ENCODE measurements at regions of chr11 and their contacts with region 1.

Region 1: DNA sequence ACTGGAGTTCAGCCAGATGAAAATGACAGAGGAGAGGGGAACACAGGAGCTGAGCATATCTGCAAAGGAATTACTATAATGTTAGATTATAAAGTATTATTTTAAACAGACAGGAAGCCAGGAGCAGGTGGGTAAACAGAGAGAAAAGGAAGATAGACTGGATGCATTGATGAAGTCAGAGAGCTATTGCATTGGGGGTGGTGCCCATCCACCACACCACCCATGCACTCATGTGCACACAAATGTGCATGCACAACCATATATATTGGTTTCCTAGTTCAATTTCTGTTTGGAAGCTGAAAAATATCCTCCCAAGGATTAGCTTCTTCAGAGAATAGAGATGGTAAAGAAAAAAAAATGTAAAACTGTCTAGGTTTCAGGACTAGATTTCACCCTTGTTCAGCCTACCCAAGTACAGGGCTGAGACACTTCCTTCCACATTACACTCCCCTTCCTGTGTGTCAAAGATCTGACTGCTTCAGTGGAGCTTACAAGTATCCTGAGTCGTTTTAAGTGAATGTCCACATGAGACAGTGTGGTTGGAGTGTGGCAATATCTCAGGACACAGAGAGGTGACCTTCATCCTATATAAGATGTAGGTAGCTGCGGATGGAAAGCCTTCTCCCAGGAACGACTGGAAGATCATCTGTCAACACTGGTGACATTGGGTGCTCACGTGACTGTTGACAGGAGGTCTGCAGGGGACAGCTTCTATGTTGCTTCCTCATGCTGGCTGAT is 12.2 kb upstream of the SMPD1 start:
- DNase-seq: no peak
- ATAC-seq: peak; percentile 79
- H3K4me3 Mint-ChIP-seq: peak overlapping the region; percentile 38
- H3K27ac Mint-ChIP-seq: peak overlapping the region; percentile 86
- H3K4me1 Mint-ChIP-seq: peaks cover 31% of the 10 kb centered on the region
- H3K27me3 Mint-ChIP-seq: no peaks in the 10 kb centered on the region

Region 2: DNA sequence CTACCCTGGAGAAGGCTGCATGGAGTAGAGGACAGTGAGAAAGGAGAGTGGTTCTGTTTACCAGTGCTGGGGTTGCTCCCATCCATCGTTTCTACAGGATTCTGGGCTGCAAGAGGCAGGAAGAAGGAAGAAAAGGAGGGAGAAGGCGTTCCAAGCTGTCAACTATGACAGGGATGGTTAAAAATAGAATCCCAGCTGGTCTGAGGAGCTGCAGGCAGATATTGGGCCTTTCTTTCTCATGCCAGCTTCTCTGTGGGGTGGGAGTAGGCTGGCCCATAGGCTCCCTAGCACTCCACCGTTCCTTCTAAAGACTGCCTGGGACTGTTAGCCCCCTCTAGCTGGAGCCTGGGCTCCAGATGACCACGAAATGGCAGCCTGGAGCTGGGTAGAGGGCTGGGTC is 104.9 kb before region 1 on chr11:
- CTCF ChIA-PET with region 1: no interaction called
- DNase-seq: no peak
- ATAC-seq: no peak
- H3K4me3 Mint-ChIP-seq: no peak overlapping the region
- H3K27ac Mint-ChIP-seq: no peak overlapping the region
- H3K4me1 Mint-ChIP-seq: peaks cover 7% of the 10 kb centered on the region
- H3K27me3 Mint-ChIP-seq: peaks cover 44% of the 10 kb centered on the region

Region 3: GRCh38 chr11:6362873-6363678 is 15.0 kb before region 1 on chr11:
- CTCF ChIA-PET with region 1: interaction called, 95 read pairs
- DNase-seq: peak; percentile 83
- ATAC-seq: peak; percentile 91
- H3K4me3 Mint-ChIP-seq: no peak overlapping the region
- H3K27ac Mint-ChIP-seq: no peak overlapping the region
- H3K4me1 Mint-ChIP-seq: no peaks in the 10 kb centered on the region
- H3K27me3 Mint-ChIP-seq: no peaks in the 10 kb centered on the region

Region 4: DNA sequence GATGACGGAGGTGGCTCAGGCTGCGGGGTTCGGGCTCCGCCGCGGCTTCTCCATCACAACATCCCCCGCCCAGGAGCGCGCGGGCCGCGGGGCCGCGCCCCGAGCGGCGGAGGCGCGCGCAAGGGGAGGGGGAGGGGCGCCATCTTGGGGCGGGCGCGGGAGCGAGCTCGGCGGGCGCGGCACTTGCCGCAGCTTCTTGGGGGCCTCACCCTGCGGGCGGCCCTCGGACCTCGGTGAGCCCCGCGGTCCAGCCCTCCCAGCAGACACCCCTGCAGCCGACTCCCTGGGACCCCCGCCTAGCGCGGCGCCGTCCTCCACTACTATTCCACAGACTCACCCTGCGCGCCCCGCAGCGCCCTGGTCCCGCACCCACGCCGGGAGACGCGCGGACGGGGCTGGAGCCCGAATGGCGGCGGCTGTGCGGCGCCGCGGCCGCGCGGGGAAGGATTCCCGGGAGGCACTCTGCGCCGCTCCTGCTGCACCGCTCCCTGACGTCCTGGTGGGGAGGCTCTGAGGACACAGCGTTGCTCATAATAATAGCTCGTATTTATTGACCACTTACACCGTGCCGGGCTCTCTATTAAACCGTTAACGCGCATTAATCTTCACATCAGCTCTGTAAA is 41.0 kb after region 1 on chr11 and contains the start of gene APBB1:
- CTCF ChIA-PET with region 1: interaction called, 17 read pairs
- DNase-seq: peak; percentile 72
- ATAC-seq: peak; percentile 79
- H3K4me3 Mint-ChIP-seq: no peak within 1 kb of the TSS
- H3K27ac Mint-ChIP-seq: peak within 1 kb of the TSS; percentile 30
- H3K4me1 Mint-ChIP-seq: peaks cover 6% of the 10 kb centered on the region
- H3K27me3 Mint-ChIP-seq: peaks cover 28% of the 10 kb centered on the region
- total RNA-seq, gene APBB1: 38.7 to 43.4 TPM

Region 5: DNA sequence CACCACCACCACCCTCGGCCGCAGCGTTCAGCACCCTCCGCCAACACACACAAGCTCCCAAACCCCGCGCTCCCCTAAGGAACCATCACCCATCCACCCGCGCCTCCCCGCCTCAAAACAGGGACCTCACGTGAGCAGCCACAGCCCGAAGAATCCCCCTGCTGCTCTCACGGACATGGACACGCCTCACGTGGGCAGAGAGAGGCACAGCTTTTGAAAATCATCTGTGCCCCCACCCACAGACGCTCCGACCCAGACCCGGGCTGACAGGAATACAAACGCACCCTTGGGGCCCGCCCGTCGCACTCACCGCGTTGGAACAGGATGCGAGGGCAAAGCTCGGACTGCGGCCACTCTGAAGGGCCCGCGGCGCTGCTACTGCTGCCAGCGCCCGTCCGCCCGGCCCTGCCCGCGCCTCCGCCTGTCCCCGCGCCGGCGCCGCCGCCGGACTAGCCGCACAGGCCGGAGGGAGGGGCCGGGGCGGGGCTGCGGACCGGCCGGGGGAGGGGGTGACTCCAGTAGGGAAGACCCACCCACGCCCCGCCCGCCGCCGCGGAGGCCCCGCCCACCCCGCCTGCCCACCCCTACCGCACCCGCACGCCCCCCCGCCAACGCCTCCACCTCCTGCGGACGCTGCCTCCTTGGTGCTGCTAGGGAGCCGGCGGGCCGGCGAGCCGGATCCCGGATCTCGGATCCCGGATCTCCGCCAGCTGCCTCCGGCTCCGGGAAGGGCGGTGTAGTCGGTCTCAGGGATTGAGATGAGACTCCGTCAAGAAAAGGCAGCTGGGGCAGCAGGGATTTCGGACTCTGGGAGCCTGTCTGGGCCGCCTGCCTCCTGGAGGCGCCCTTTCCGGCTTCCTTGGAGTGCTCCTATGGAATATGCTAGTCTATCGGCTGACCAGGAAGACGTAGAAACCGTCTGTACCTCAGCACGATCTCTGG is 95.7 kb after region 1 on chr11 and contains the start of gene TRIM3:
- CTCF ChIA-PET with region 1: interaction called, 19 read pairs
- DNase-seq: peak; percentile 75
- ATAC-seq: peak; percentile 82
- H3K4me3 Mint-ChIP-seq: peak within 1 kb of the TSS; percentile 80
- H3K27ac Mint-ChIP-seq: peak within 1 kb of the TSS; percentile 31
- H3K4me1 Mint-ChIP-seq: peaks cover 12% of the 10 kb centered on the region
- H3K27me3 Mint-ChIP-seq: no peaks in the 10 kb centered on the region
- total RNA-seq, gene TRIM3: 4.8 to 5.1 TPM

Region 6: DNA sequence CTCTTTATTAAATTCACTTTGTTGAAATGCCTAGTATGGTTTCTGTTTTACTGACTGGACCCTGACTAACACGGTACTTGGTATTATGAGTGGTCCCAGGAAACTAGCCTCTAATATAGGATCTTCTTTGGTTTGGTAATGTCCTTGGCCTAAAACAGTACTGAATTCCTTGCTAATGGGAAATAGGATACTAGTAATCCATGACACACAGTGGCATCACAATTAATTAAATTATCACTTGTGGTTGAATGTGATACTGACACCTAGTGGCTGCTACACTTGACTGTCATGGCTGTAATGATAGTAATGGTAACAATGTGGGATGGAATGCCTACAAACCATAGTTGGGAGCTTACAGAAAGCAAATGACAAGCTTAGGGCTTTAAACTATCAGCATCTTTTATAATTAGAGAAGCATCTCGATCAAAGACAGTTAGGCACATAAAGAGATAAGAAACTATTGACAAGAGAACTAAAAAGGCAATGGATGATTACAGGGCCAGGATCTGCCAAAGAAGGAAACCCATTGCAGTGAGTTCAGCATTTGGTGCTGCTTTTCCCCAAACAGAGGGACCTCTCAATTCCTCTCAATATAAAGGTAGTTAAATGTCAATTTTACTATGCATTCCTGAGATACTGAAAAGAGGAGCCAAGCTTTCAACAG is 127.6 kb after region 1 on chr11:
- CTCF ChIA-PET with region 1: interaction called, 82 read pairs
- DNase-seq: no peak
- ATAC-seq: peak; percentile 63
- H3K4me3 Mint-ChIP-seq: no peak overlapping the region
- H3K27ac Mint-ChIP-seq: no peak overlapping the region
- H3K4me1 Mint-ChIP-seq: peaks cover 4% of the 10 kb centered on the region
- H3K27me3 Mint-ChIP-seq: no peaks in the 10 kb centered on the region

Region 7: GRCh38 chr11:6674862-6675261 is 296.8 kb after region 1 on chr11:
- CTCF ChIA-PET with region 1: interaction called, 11 read pairs
- DNase-seq: no peak
- ATAC-seq: no peak
- H3K4me3 Mint-ChIP-seq: no peak overlapping the region
- H3K27ac Mint-ChIP-seq: no peak overlapping the region
- H3K4me1 Mint-ChIP-seq: peaks cover 45% of the 10 kb centered on the region
- H3K27me3 Mint-ChIP-seq: no peaks in the 10 kb centered on the region

Region 8: GRCh38 chr11:6812390-6813005 is 434.4 kb after region 1 on chr11:
- CTCF ChIA-PET with region 1: no interaction called
- DNase-seq: peak; percentile 46
- ATAC-seq: peak; percentile 76
- H3K4me3 Mint-ChIP-seq: no peak overlapping the region
- H3K27ac Mint-ChIP-seq: no peak overlapping the region
- H3K4me1 Mint-ChIP-seq: no peaks in the 10 kb centered on the region
- H3K27me3 Mint-ChIP-seq: peaks cover 23% of the 10 kb centered on the region

Measured in activated CD8-positive, alpha-beta memory T cell treated with anti-CD3 and anti-CD28 coated beads, Interleukin-2, amount 10 ng/mL, durations not matched to agents 7 days and 5 days (primary cell).